ENCODE measurements at regions of chr5 and their contacts with region 1.

Region 1: DNA sequence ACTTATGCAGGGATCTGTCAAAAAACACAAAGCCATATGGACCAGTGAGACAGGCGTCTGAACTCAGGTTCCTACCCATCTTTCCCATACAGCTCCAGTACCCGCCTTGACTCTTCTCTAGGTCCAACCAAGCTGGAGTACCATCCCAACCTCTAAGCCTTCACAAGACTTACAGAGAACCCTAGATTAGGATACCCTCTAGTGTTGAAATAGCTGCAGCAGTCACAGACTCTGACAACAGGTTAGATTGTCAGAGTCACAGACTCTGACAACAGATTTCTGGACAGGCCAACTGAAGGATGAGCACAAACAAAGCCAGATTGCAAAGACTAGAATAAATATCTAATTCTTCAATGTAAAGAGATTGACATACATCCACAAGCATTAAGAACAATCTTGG is 266.1 kb downstream of the GRIA1 start:
- DNase-seq: peak; percentile 11
- H3K4me3 ChIP-seq: no peak overlapping the region
- H3K27ac ChIP-seq: no peak overlapping the region
- H3K4me1 ChIP-seq: no peaks in the 10 kb centered on the region
- CTCF ChIP-seq: peak; percentile 61

Region 2: DNA sequence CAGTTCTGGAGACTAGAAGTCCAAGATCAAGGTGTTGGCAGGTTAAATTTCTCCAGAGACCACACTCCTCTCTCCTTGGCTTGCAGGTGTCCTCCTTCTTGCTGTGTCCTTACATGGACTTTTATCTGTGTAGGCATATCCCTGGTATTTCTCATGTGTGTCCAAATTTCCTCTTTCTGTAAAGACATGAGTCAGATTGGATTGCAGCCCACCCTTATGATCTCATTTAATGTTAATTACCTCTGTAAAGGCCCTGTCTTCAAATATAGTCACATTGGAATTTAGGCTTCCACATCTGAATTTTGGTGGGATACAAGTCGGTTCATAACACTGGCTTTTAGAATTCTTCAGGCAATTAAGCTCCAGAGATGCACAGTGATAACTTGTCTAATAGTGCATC is 588.3 kb before region 1 on chr5:
- CTCF ChIA-PET with region 1: no interaction called
- POLR2A ChIA-PET with region 1: no interaction called
- intact Hi-C with region 1: loop called (anchors 10 kb)
- DNase-seq: no peak
- H3K4me3 ChIP-seq: no peak overlapping the region
- H3K27ac ChIP-seq: no peak overlapping the region
- H3K4me1 ChIP-seq: no peaks in the 10 kb centered on the region
- CTCF ChIP-seq: no peak

Region 3: DNA sequence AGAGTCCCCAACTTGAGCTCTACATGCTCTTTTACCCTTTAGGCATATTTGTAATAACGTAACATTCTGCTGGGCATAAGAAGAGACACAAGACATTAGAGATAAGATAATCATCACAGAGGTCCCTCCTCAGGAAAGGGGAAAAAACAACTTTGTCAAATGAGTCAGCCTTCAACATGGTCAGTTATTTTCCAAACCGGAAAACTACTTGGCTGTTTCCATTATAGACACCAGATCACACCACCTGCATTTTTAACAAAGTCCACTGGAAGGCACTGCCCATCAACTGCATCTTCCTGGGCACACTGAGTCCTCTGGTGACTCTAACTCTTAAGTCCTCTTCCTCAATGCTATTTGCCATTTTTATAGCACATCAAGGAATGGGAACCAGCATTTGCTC is 60.3 kb after region 1 on chr5:
- CTCF ChIA-PET with region 1: no interaction called
- POLR2A ChIA-PET with region 1: no interaction called
- intact Hi-C with region 1: no loop called
- DNase-seq: no peak
- H3K4me3 ChIP-seq: no peak overlapping the region
- H3K27ac ChIP-seq: no peak overlapping the region
- H3K4me1 ChIP-seq: peaks cover 20% of the 10 kb centered on the region
- CTCF ChIP-seq: peak; percentile 49; the same call in 1 of the 2 replicates

Measured in OCI-LY7 (cell line).